ENCODE measurements at regions of chr2 and their contacts with region 1.

Region 1: GRCh38 chr2:50529600-50530218 is 502.2 kb downstream of the NRXN1 start:
- DNase-seq: peak; percentile 43
- ATAC-seq: peak; percentile 87
- H3K4me3 ChIP-seq: no peak overlapping the region
- H3K27ac ChIP-seq: no peak overlapping the region
- H3K4me1 ChIP-seq: no peaks in the 10 kb centered on the region
- H3K27me3 ChIP-seq: no peaks in the 10 kb centered on the region
- CTCF ChIP-seq: peak; percentile 43 to 72 (median 59); a peak in 5 of 6 replicates
- POLR2A ChIP-seq: no peak
- RAD21 ChIP-seq: peak; percentile 70

Region 2: GRCh38 chr2:51335087-51336058 is 805.7 kb after region 1 on chr2:
- CTCF ChIA-PET with region 1: no interaction called
- POLR2A ChIA-PET with region 1: no interaction called
- RAD21 ChIA-PET with region 1: no interaction called
- intact Hi-C with region 1: loop called (anchors 10 kb)
- DNase-seq: no peak
- ATAC-seq: no peak
- H3K4me3 ChIP-seq: no peak overlapping the region
- H3K27ac ChIP-seq: no peak overlapping the region
- H3K4me1 ChIP-seq: no peaks in the 10 kb centered on the region
- H3K27me3 ChIP-seq: no peaks in the 10 kb centered on the region
- CTCF ChIP-seq: peak in 2 of 3 experiments; percentile 17 to 61; a peak in 3 of 6 replicates
- POLR2A ChIP-seq: no peak
- RAD21 ChIP-seq: peak; percentile 22; the same call in 1 of the 2 replicates

Measured in HCT116 (cell line).